Posterior vena cava (tissue), 2 donors: ENCODE measurements at regions of chr4 and their contacts with region 1.

Region 1: DNA sequence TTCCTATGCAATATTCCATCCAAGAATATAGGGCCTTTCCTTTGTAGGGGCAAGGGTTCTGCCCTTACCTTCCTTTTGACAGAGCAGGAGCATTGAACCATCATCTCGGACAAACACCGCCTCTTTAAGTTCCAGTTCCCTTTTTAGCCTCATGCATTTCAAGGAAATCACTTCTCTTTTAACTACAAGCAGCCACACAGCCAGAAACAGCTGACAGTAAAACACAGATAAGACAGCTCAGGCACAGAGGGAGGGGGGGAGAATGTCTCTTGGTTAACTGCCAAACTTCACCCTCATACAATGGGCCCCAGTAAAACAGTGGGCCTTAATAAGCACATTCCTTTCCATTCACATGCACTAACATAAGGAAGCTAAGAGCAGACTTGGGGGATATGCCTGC is 648.3 kb downstream of the GABRG1 start:
- DNase-seq: no peak

Region 2: DNA sequence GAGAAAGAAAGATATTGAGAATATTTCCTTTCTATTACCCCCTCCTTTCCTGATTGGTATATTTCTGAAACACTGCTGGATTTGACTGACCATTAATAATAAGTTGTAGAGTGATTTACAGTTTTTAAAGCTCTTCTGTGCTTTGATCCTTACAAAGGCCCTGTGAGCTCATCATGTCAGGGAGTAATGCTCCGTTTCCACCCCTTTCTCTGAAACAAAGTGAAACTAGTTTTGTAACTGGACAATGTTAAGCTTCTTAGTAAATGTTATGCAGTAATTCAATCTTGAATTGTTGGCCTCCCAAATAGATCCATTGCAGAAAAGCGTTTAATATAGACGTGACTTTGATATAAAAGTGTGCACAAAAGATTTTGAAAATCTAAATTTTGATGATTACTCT is 559.1 kb before region 1 on chr4:
- intact Hi-C with region 1: no loop called
- DNase-seq: no peak

Region 3: GRCh38 chr4:45629717-45630116 is 154.2 kb after region 1 on chr4:
- intact Hi-C with region 1: loop called in 1 of 2 experiments (anchors 10 kb)
- DNase-seq: no peak